AG04450 (cell line): ENCODE measurements at regions of chr18 and their contacts with region 1.

Region 1: GRCh38 chr18:11310476-11311086 is 161.2 kb upstream of the PIEZO2 start:
- DNase-seq: no peak
- H3K4me3 ChIP-seq: no peak overlapping the region
- H3K27ac ChIP-seq: no peak overlapping the region
- H3K27me3 ChIP-seq: no peaks in the 10 kb centered on the region
- CTCF ChIP-seq: peak; percentile 86

Region 2: GRCh38 chr18:11148655-11149440 is 161.7 kb before region 1 on chr18:
- CTCF ChIA-PET with region 1: no interaction called
- POLR2A ChIA-PET with region 1: no interaction called
- DNase-seq: no peak
- H3K4me3 ChIP-seq: peak overlapping the region; percentile 46
- H3K27ac ChIP-seq: no peak overlapping the region
- H3K27me3 ChIP-seq: peaks cover 57% of the 10 kb centered on the region
- CTCF ChIP-seq: no peak

Region 3: GRCh38 chr18:11286431-11286830 is 24.1 kb before region 1 on chr18:
- CTCF ChIA-PET with region 1: interaction called, 14 read pairs
- POLR2A ChIA-PET with region 1: no interaction called
- DNase-seq: no peak
- H3K4me3 ChIP-seq: no peak overlapping the region
- H3K27ac ChIP-seq: no peak overlapping the region
- H3K27me3 ChIP-seq: peaks cover 2% of the 10 kb centered on the region
- CTCF ChIP-seq: no peak

Region 4: DNA sequence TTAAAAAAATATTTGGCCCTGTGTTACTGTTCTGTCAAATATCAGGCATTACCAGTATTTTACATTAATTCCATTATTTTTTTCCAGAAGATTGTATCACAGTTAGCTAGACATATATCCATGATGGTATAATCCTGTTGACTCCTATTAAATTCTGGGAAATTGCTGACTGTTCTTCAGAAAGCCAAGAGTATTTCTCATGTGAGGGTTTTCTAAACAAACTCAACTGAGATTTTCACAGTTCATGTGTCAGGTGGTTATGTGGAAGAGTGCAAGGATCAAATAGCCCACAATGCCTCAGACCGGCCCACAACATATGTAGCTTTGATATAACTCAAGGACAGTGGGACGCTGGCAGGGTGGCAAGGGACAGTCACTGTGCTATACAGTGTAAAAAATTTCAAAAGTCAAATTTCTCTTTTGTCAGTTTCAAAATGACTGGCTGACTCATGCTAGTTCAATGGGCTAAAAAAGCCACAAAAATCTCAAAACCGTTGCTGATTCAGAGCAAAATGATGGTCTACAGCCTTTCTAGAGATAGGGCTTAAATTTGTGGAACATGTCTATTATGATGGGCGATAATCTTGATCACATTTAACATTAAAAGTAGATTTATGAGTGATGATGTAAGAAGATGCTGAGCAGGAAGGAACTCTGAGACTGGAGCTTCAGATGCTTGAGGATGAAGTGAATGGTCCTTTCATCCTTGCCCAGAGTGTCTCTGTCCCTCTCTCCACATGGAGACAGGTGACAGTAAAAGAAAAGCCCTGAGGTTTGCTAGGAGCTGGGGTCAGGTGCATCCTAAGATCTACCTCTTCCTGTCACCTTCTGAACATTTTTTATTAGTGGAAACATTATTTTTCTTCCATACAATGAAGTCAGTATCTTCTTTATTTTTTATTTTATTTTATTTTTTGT is 14.6 kb after region 1 on chr18:
- CTCF ChIA-PET with region 1: interaction called, 28 read pairs
- POLR2A ChIA-PET with region 1: no interaction called
- DNase-seq: no peak
- H3K4me3 ChIP-seq: no peak overlapping the region
- H3K27ac ChIP-seq: peak overlapping the region; percentile 83
- H3K27me3 ChIP-seq: no peaks in the 10 kb centered on the region
- CTCF ChIP-seq: no peak

Region 5: GRCh38 chr18:11372163-11372562 is 61.6 kb after region 1 on chr18:
- CTCF ChIA-PET with region 1: interaction called, 10 read pairs
- POLR2A ChIA-PET with region 1: no interaction called
- DNase-seq: no peak
- H3K4me3 ChIP-seq: no peak overlapping the region
- H3K27ac ChIP-seq: no peak overlapping the region
- H3K27me3 ChIP-seq: no peaks in the 10 kb centered on the region
- CTCF ChIP-seq: no peak

Region 6: GRCh38 chr18:11512096-11513030 is 201.8 kb after region 1 on chr18:
- CTCF ChIA-PET with region 1: interaction called, 72 read pairs
- POLR2A ChIA-PET with region 1: no interaction called
- DNase-seq: no peak
- H3K4me3 ChIP-seq: no peak overlapping the region
- H3K27ac ChIP-seq: no peak overlapping the region
- H3K27me3 ChIP-seq: no peaks in the 10 kb centered on the region
- CTCF ChIP-seq: peak; percentile 38; the same call in 1 of the 2 replicates

Region 7: GRCh38 chr18:11553098-11553940 is 242.7 kb after region 1 on chr18:
- CTCF ChIA-PET with region 1: interaction called, 170 read pairs
- POLR2A ChIA-PET with region 1: no interaction called
- DNase-seq: peak; percentile 23
- H3K4me3 ChIP-seq: no peak overlapping the region
- H3K27ac ChIP-seq: no peak overlapping the region
- H3K27me3 ChIP-seq: peaks cover 8% of the 10 kb centered on the region
- CTCF ChIP-seq: peak; percentile 97

Region 8: GRCh38 chr18:11591957-11592356 is 281.4 kb after region 1 on chr18:
- CTCF ChIA-PET with region 1: no interaction called
- POLR2A ChIA-PET with region 1: no interaction called
- DNase-seq: no peak
- H3K4me3 ChIP-seq: no peak overlapping the region
- H3K27ac ChIP-seq: no peak overlapping the region
- H3K27me3 ChIP-seq: no peaks in the 10 kb centered on the region
- CTCF ChIP-seq: no peak